ENCODE measurements at regions of chr3 and their contacts with region 1.

Region 1: GRCh38 chr3:20511863-20512505 is 326.0 kb upstream of the SGO1 start:
- ATAC-seq: peak; percentile 65 to 99 (median 90)
- H3K4me3 ChIP-seq: no peak overlapping the region
- H3K27ac ChIP-seq: no peak overlapping the region
- H3K4me1 ChIP-seq: no peaks in the 10 kb centered on the region

Region 2: GRCh38 chr3:20340324-20340928 is 171.6 kb before region 1 on chr3:
- in situ Hi-C with region 1: loop called in 1 of 9 experiments (anchors 25 kb)
- ATAC-seq: peak; percentile 60 to 89 (median 78)
- H3K4me3 ChIP-seq: no peak overlapping the region
- H3K27ac ChIP-seq: no peak overlapping the region
- H3K4me1 ChIP-seq: no peaks in the 10 kb centered on the region

Region 3: DNA sequence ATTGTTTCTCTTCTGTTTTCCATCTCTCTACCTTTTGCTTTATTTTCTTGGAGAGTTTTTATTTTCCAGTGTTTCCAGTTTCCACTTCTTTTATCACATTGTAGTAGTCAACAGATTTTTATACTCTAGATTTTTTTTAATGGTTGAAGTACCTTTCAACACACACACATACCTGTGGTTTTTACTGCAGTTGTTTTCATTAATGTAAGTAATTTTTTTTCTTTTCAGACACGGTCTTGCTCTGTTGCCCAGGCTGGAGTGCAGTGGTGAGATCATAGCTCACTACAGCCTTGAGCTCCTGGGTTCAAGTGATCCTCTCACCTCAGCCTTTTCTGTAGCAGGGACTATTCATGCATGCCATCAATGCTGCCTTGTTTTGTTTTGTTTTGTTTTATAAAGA is 146.5 kb after region 1 on chr3:
- in situ Hi-C with region 1: no loop called
- ATAC-seq: no peak
- H3K4me3 ChIP-seq: no peak overlapping the region
- H3K27ac ChIP-seq: no peak overlapping the region
- H3K4me1 ChIP-seq: no peaks in the 10 kb centered on the region

Region 4: GRCh38 chr3:20905210-20905805 is 393.3 kb after region 1 on chr3:
- in situ Hi-C with region 1: loop called in 1 of 9 experiments (anchors 25 kb)
- ATAC-seq: no peak
- H3K4me3 ChIP-seq: no peak overlapping the region
- H3K27ac ChIP-seq: no peak overlapping the region
- H3K4me1 ChIP-seq: no peaks in the 10 kb centered on the region

Region 5: GRCh38 chr3:21484057-21484827 is 972.3 kb after region 1 on chr3:
- in situ Hi-C with region 1: loop called in 2 of 9 experiments (anchors 25 kb)
- ATAC-seq: peak in 4 of 8 experiments; percentile 62 to 99 (median 84)
- H3K4me3 ChIP-seq: no peak overlapping the region
- H3K27ac ChIP-seq: no peak overlapping the region
- H3K4me1 ChIP-seq: no peaks in the 10 kb centered on the region

Region 6: DNA sequence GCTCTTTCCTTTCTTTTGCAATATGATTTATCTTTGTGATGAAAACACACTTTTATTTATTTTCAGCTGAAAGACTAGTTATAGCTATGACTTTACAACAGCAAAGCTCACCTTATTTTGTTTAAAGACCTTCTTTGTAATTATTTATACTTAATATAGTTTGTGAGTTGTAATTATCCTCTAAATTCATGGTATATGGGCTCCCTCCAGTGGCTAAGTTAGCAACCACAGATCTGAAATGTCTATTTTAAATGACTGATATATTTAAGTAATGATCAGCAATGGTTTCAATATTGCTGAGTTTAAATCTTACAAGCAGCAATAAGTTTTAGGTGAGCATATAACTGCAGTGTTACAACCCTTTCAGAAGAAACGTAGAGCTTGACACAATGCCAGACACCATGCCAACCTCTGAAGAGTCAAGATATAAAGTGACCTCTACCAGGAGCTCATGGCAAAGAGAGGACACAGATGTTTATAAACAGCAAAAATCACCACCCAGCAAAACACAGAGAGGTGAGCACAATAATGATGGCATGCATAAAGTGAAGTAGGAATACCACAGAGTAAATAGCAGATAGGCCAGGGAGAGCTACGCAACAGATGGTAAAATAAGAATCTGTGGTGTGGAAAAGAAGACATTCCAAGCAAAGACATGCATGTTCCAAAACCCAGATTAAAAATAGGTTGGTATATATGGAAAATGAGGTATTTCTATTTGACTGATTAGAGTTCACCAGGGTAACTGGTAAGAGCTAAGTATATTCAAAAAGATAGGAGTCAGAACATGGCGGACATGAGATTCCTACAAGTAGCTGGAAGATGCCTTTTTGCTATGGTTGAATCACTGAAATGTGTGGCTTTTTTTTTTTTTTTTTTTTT is 1382.7 kb after region 1 on chr3:
- in situ Hi-C with region 1: loop called in 1 of 9 experiments (anchors 25 kb)
- ATAC-seq: peak in 1 of 8 experiments; percentile 15
- H3K4me3 ChIP-seq: no peak overlapping the region
- H3K27ac ChIP-seq: no peak overlapping the region
- H3K4me1 ChIP-seq: no peaks in the 10 kb centered on the region

Region 7: DNA sequence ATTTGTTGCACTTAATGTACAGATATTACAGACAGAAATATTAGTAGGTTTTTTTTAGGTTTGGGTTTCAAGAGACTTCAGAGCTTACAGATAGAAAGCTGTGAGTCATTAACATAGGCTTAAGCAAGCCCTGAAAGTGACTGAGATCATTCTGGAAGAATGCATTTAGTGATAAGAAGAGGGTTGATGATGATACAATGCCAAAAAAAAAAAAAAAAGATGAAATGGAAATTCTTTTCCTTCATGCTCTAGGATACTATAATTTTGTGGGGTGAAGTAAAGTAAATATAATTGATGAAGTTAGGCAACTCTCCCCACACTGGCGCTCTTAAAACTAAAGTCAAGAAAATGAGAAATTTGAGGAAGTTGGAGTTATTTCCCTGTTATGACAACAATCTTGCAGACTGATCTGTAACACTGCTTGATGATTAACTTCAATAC is 1408.5 kb after region 1 on chr3:
- in situ Hi-C with region 1: loop called in 1 of 9 experiments (anchors 25 kb)
- ATAC-seq: peak in 4 of 8 experiments; percentile 41 to 71 (median 46)
- H3K4me3 ChIP-seq: no peak overlapping the region
- H3K27ac ChIP-seq: no peak overlapping the region
- H3K4me1 ChIP-seq: no peaks in the 10 kb centered on the region